CD8-positive, alpha-beta T cell (primary cell): ENCODE measurements at regions of chr1 and their contacts with region 1.

Region 1: GRCh38 chr1:224182866-224183590 is at the start of gene DEGS1:
- DNase-seq: peak; percentile 71 to 92 (median 84)
- ATAC-seq: peak; percentile 77
- H3K4me3 ChIP-seq: peak within 1 kb of the TSS; percentile 70 to 90
- H3K4me3 Mint-ChIP-seq: peak within 1 kb of the TSS; percentile 90
- H3K27ac ChIP-seq: peak within 1 kb of the TSS; percentile 88 to 94
- H3K27ac Mint-ChIP-seq: peak within 1 kb of the TSS; percentile 95
- H3K4me1 ChIP-seq: peaks cover 33% of the 10 kb centered on the region
- H3K4me1 Mint-ChIP-seq: peaks cover 48% of the 10 kb centered on the region
- H3K27me3 ChIP-seq: no peaks in the 10 kb centered on the region
- H3K27me3 Mint-ChIP-seq: no peaks in the 10 kb centered on the region
- CTCF ChIP-seq: no peak
- total RNA-seq, gene DEGS1: 52.1 to 54.7 TPM

Region 2: GRCh38 chr1:224113918-224114786 is 68.9 kb before region 1 on chr1 and contains the start of gene FBXO28:
- CTCF ChIA-PET with region 1: interaction called, 3 read pairs
- POLR2A ChIA-PET with region 1: interaction called, 8 read pairs
- intact Hi-C with region 1: loop called (anchors 1 to 2 kb)
- DNase-seq: peak; percentile 86 to 96 (median 94)
- ATAC-seq: peak; percentile 92
- H3K4me3 ChIP-seq: peak within 1 kb of the TSS; percentile 78 to 82
- H3K4me3 Mint-ChIP-seq: peak within 1 kb of the TSS; percentile 92
- H3K27ac ChIP-seq: peak within 1 kb of the TSS; percentile 94 to 97
- H3K27ac Mint-ChIP-seq: peak within 1 kb of the TSS; percentile 95
- H3K4me1 ChIP-seq: peaks cover 22% of the 10 kb centered on the region
- H3K4me1 Mint-ChIP-seq: peaks cover 34% of the 10 kb centered on the region
- H3K27me3 ChIP-seq: no peaks in the 10 kb centered on the region
- H3K27me3 Mint-ChIP-seq: peaks cover 12% of the 10 kb centered on the region
- CTCF ChIP-seq: no peak
- total RNA-seq, gene FBXO28: 43.4 to 44.2 TPM

Region 3: DNA sequence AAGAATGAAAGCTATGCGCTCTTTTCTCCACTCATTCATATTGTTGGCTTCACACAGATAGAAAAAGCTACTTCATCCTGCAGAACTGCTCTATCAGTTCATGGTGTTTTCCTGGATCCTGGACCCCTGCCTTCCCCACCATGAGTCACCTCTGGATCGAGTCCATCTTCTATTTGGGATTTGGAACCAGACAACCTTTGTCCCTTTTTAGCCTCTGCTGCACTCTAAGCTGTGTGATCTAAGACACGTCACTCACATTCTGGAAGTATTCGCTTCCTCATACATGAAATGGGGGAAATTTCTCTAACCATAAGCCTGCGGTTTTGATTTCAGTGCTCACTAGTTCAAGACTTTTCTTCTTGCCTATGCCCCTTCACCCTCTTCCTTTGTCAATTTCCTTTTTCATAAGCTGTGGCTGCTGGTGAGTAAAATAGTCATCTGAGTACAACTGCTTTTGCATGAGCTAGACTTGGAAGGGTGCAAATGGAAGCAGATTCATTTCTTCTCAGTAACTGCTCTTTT is 14.1 kb before region 1 on chr1:
- CTCF ChIA-PET with region 1: interaction called, 6 read pairs
- POLR2A ChIA-PET with region 1: interaction called, 14 read pairs
- intact Hi-C with region 1: loop called (anchors 1 kb)
- DNase-seq: peak in 5 of 9 experiments; percentile 9 to 84 (median 25)
- ATAC-seq: peak; percentile 86
- H3K4me3 ChIP-seq: no peak overlapping the region
- H3K4me3 Mint-ChIP-seq: peak overlapping the region; percentile 33
- H3K27ac ChIP-seq: no peak overlapping the region
- H3K27ac Mint-ChIP-seq: peak overlapping the region; percentile 49
- H3K4me1 ChIP-seq: peaks cover 29% of the 10 kb centered on the region
- H3K4me1 Mint-ChIP-seq: peaks cover 31% of the 10 kb centered on the region
- H3K27me3 ChIP-seq: no peaks in the 10 kb centered on the region
- H3K27me3 Mint-ChIP-seq: no peaks in the 10 kb centered on the region
- CTCF ChIP-seq: no peak

Region 4: GRCh38 chr1:224273641-224274040 is 90.6 kb after region 1 on chr1:
- CTCF ChIA-PET with region 1: no interaction called
- POLR2A ChIA-PET with region 1: no interaction called
- intact Hi-C with region 1: loop called in 1 of 2 experiments (anchors 10 kb)
- DNase-seq: no peak
- ATAC-seq: no peak
- H3K4me3 ChIP-seq: no peak overlapping the region
- H3K4me3 Mint-ChIP-seq: no peak overlapping the region
- H3K27ac ChIP-seq: no peak overlapping the region
- H3K27ac Mint-ChIP-seq: no peak overlapping the region
- H3K4me1 ChIP-seq: no peaks in the 10 kb centered on the region
- H3K4me1 Mint-ChIP-seq: no peaks in the 10 kb centered on the region
- H3K27me3 ChIP-seq: no peaks in the 10 kb centered on the region
- H3K27me3 Mint-ChIP-seq: no peaks in the 10 kb centered on the region
- CTCF ChIP-seq: no peak

Region 5: DNA sequence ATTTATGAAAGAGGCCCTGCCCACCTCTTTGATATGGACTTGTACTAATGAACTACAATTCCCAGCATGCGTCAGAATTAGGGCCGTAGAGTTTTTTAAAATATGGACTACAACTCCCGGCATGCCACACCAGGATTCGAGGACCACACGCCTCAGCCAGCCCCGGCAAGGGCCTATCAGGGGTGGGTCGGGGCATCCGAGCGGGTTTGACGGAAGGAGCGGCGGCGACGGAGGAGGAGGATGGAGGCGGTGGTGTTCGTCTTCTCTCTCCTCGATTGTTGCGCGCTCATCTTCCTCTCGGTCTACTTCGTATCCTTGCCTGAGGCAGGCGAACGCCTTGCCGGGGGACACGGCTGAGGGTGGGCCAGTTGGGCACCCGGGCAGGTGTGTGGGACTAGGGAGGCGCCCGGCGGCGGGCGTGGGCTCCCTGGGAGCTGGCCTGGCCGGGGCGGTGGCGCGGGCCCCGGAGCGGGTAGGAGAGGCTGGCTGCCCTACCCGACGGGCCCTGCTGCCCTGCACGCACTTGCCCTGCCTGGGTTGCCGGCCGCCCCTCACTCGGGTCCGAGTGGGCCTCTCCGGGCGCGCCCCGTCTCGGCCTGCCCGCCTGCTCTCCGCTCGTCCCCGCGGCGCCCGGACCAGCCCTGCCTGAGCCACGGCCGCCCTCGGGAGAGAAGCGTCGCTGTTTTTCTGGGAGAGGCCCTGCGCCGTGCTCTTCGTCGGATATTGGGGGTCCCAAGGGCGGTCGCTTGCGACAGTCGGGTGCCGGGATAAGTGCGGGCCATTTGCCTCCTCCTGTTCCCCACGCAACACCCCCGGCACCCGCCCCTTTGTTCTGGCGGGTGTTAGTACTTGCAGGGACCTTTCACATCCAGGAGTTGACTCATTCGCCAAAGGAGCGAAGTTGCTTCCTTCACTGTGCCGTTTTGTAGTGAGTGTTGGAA is 173.9 kb after region 1 on chr1 and contains the start of gene CNIH4:
- CTCF ChIA-PET with region 1: no interaction called
- POLR2A ChIA-PET with region 1: interaction called, 3 read pairs
- intact Hi-C with region 1: loop called in 1 of 2 experiments (anchors 1 kb)
- DNase-seq: peak; percentile 81 to 97 (median 90)
- ATAC-seq: peak; percentile 99
- H3K4me3 ChIP-seq: peak within 1 kb of the TSS; percentile 60 to 78
- H3K4me3 Mint-ChIP-seq: peak within 1 kb of the TSS; percentile 87
- H3K27ac ChIP-seq: peak within 1 kb of the TSS; percentile 63 to 74
- H3K27ac Mint-ChIP-seq: peak within 1 kb of the TSS; percentile 92
- H3K4me1 ChIP-seq: peaks cover 33% of the 10 kb centered on the region
- H3K4me1 Mint-ChIP-seq: peaks cover 53% of the 10 kb centered on the region
- H3K27me3 ChIP-seq: no peaks in the 10 kb centered on the region
- H3K27me3 Mint-ChIP-seq: no peaks in the 10 kb centered on the region
- CTCF ChIP-seq: no peak
- total RNA-seq, gene CNIH4: 26.5 to 28.6 TPM

Region 6: DNA sequence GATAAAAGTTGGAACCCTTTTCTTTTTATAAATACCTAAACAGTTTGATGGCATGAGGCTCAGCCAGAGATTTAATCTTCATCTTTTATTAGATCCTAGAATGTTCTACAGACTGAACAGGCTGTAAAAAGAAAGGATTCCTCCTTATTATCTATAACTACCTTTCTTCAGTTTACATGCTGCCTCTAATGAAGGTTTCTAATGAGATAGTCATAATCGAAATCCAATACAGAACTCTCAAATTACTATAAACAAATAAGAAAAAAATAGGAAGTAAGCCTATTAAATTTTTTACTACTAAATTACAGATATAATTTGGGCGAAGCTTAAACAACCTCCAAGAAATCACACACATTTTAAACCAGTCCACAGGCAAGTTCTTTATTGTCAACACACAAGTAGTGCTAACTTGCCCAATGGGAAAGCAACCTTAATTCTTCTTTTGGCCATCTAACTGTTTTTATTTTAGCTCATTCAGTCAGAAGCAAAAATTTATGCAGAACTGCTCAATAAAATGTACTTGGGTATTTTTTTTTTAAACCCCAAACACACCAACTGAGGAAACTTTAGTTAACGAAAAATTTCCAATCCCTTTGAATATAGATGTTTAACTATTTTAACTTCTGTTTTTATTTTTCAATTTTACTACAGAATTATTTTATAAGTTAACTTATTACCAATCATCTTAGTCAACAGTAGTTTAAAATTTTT is 246.7 kb after region 1 on chr1:
- CTCF ChIA-PET with region 1: no interaction called
- POLR2A ChIA-PET with region 1: interaction called, 6 read pairs
- intact Hi-C with region 1: loop called (anchors 2 to 10 kb)
- DNase-seq: no peak
- ATAC-seq: no peak
- H3K4me3 ChIP-seq: no peak overlapping the region
- H3K4me3 Mint-ChIP-seq: no peak overlapping the region
- H3K27ac ChIP-seq: peak overlapping the region in 1 of 2 experiments; percentile 74
- H3K27ac Mint-ChIP-seq: no peak overlapping the region
- H3K4me1 ChIP-seq: peaks cover 48% of the 10 kb centered on the region
- H3K4me1 Mint-ChIP-seq: peaks cover 63% of the 10 kb centered on the region
- H3K27me3 ChIP-seq: no peaks in the 10 kb centered on the region
- H3K27me3 Mint-ChIP-seq: no peaks in the 10 kb centered on the region
- CTCF ChIP-seq: no peak